Dorsolateral prefrontal cortex (tissue), 120 donors: ENCODE measurements at regions of chr11 and their contacts with region 1.

Region 1: DNA sequence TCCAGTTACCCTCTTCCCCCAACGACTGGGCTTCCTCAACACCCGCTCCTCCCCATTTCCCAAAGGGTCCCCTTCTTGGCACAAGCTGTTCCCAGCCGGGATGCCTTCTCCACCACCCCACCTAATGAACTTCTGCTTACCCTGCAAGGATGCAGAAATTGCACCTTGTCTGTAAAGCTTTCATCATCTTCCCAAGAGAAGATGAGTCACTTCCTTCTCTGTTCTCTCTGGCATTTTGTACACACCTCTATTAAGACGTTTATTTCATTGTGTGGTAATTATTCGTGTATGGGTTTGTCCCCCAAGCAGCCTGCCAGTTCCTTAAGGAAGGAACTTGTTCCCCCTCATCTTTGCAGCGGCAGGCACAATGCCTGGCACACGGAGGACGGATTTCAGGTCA is 351.1 kb downstream of the CADM1 start:
- DNase-seq: peak in 1 of 10 donors; percentile 20
- H3K4me3 ChIP-seq: no peak overlapping the region
- H3K27ac ChIP-seq: no peak overlapping the region
- H3K27me3 ChIP-seq: peaks cover 0 to 10% (median 0%) of the 10 kb centered on the region in 45 donors
- CTCF ChIP-seq: no peak

Region 2: GRCh38 chr11:115112754-115113153 is 40.4 kb before region 1 on chr11:
- intact Hi-C with region 1: no loop called
- DNase-seq: no peak
- H3K4me3 ChIP-seq: no peak overlapping the region
- H3K27ac ChIP-seq: no peak overlapping the region
- H3K27me3 ChIP-seq: no peaks in the 10 kb centered on the region
- CTCF ChIP-seq: no peak

Region 3: GRCh38 chr11:115141221-115142114 is 11.7 kb before region 1 on chr11:
- intact Hi-C with region 1: no loop called
- DNase-seq: peak in 1 of 10 donors; percentile 66
- H3K4me3 ChIP-seq: no peak overlapping the region
- H3K27ac ChIP-seq: no peak overlapping the region
- H3K27me3 ChIP-seq: peaks cover 0 to 20% (median 0%) of the 10 kb centered on the region in 45 donors
- CTCF ChIP-seq: no peak

Region 4: DNA sequence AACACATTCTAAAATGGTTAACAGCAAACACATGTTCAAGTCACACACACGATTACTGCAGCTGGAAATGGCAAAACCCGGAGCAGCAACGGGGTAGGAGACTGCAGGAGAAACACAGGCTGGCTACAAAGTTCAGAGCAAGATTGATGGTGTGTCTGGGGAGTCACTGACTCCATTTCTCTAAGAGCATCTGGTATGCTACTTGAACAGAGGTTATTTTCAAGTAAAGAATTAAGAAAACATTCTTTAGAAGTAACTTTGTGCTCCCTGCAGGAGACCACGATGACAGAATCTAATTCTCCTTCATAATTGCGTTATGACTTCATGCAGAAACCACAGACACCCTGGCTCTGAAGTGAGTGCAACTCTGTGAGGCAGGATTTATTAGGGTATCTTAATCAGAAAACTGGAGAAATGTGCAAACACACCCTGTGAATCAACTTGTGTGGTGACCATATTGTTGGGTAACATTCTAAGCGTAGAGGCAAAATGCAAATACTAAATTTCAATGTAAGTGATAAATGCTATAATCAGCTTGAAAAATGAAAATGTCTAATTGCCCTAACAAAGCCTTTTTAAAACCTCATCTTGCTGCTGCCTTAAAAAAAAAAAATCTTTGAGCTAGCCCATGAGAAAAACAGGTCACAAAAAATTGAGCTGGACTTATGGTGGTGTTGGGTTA is 48.1 kb after region 1 on chr11:
- intact Hi-C with region 1: no loop called
- DNase-seq: no peak
- H3K4me3 ChIP-seq: no peak overlapping the region
- H3K27ac ChIP-seq: no peak overlapping the region
- H3K27me3 ChIP-seq: no peaks in the 10 kb centered on the region
- CTCF ChIP-seq: no peak

Region 5: GRCh38 chr11:116035977-116036376 is 882.8 kb after region 1 on chr11:
- intact Hi-C with region 1: loop called in 1 of 2 experiments (anchors 10 kb)
- DNase-seq: no peak
- H3K4me3 ChIP-seq: no peak overlapping the region
- H3K27ac ChIP-seq: no peak overlapping the region
- H3K27me3 ChIP-seq: peaks cover 0 to 15% (median 0%) of the 10 kb centered on the region in 45 donors
- CTCF ChIP-seq: no peak